Activated CD8-positive, alpha-beta memory T cell treated with anti-CD3 and anti-CD28 coated beads, Interleukin-2, amount 10 ng/mL, durations not matched to agents 7 days and 5 days (primary cell): ENCODE measurements at regions of chr6 and their contacts with region 1.

Region 1: DNA sequence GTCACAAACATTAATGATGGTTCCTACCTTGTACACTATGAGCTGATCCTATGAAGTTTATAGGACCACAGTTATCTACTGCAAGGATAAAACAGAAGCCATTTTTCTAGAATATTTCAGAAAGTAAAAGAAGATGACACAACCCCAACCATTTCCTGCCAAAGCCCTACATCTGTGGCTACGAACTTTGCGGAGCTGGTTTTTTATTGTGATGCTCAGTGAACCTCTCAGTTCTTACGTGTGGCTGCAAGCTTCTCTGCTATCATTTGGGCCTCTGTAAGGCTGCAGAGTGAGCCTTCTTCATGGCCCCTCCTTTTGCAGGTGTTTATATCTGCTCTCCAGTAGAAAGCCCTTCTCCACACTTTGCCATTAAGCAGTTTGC is 17.8 kb upstream of the TAGAP start:
- DNase-seq: peak; percentile 88
- ATAC-seq: peak; percentile 86
- H3K4me3 Mint-ChIP-seq: peak overlapping the region; percentile 55
- H3K27ac Mint-ChIP-seq: peak overlapping the region; percentile 99
- H3K4me1 Mint-ChIP-seq: peaks cover 92% of the 10 kb centered on the region
- H3K27me3 Mint-ChIP-seq: peaks cover 2% of the 10 kb centered on the region

Region 2: GRCh38 chr6:159074120-159074684 is 11.6 kb after region 1 on chr6:
- CTCF ChIA-PET with region 1: interaction called, 13 read pairs
- DNase-seq: peak; percentile 9
- ATAC-seq: no peak
- H3K4me3 Mint-ChIP-seq: no peak overlapping the region
- H3K27ac Mint-ChIP-seq: no peak overlapping the region
- H3K4me1 Mint-ChIP-seq: peaks cover 37% of the 10 kb centered on the region
- H3K27me3 Mint-ChIP-seq: peaks cover 4% of the 10 kb centered on the region

Region 3: GRCh38 chr6:159806021-159806458 is 743.5 kb after region 1 on chr6:
- CTCF ChIA-PET with region 1: no interaction called
- DNase-seq: no peak
- ATAC-seq: no peak
- H3K4me3 Mint-ChIP-seq: no peak overlapping the region
- H3K27ac Mint-ChIP-seq: no peak overlapping the region
- H3K4me1 Mint-ChIP-seq: peaks cover 2% of the 10 kb centered on the region
- H3K27me3 Mint-ChIP-seq: no peaks in the 10 kb centered on the region